PC-3 (cell line): ENCODE measurements at regions of chr11 and their contacts with region 1.

Region 1: GRCh38 chr11:69443138-69443967 is 38.1 kb upstream of the LINC01488 start:
- DNase-seq: peak; percentile 96
- ATAC-seq: peak; percentile 87
- H3K4me3 ChIP-seq: peak overlapping the region; percentile 48
- H3K27ac ChIP-seq: peak overlapping the region; percentile 86
- H3K4me1 ChIP-seq: peaks cover 39% of the 10 kb centered on the region
- H3K27me3 ChIP-seq: no peaks in the 10 kb centered on the region
- CTCF ChIP-seq: no peak

Region 2: DNA sequence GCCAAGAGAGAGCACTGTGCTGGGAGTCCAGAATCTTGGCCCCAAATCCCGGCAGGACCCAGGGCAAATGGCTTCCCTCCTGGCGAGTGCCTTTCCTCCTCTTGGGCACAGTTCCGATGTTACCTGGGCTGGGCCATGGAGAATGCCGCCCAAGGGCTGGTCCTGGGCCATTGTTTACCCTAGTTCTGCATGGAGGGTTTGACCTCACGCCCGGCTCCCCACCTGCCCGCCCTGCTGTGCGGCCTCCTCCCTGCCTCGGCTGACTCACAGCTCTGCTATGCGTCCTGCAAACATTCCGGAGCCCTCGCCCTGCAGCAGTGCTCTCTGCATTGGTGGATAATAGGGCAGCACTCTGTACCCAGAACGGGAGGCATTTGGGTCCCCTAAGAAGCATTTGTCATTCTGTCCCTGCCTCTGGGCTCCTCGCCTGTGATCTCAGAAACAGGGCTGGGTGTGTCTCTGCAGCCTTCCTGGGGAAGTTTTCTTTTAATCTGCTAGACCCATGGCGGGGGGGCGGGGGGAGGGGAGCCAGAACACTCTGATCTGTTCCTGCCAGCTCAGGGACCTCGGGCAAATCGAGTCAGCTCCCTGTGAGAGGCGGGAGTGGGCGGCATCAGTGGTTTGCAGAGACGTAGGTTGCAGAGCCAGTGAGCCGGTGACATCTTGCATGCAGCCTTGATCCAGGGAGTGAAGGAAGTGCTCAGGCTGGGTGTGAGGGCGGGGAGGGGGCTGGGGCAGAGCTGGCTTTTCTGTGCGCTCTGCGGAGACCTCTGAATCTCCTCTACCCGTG is 320.5 kb before region 1 on chr11:
- CTCF ChIA-PET with region 1: no interaction called
- POLR2A ChIA-PET with region 1: no interaction called
- intact Hi-C with region 1: loop called (anchors 10 kb)
- DNase-seq: peak; percentile 100
- ATAC-seq: peak; percentile 94
- H3K4me3 ChIP-seq: peak overlapping the region; percentile 41
- H3K27ac ChIP-seq: peak overlapping the region; percentile 97
- H3K4me1 ChIP-seq: peaks cover 32% of the 10 kb centered on the region
- H3K27me3 ChIP-seq: no peaks in the 10 kb centered on the region
- CTCF ChIP-seq: no peak

Region 3: GRCh38 chr11:69274531-69275255 is 168.7 kb before region 1 on chr11:
- CTCF ChIA-PET with region 1: no interaction called
- POLR2A ChIA-PET with region 1: no interaction called
- intact Hi-C with region 1: no loop called
- DNase-seq: peak; percentile 96
- ATAC-seq: peak; percentile 76
- H3K4me3 ChIP-seq: no peak overlapping the region
- H3K27ac ChIP-seq: peak overlapping the region; percentile 91
- H3K4me1 ChIP-seq: peaks cover 46% of the 10 kb centered on the region
- H3K27me3 ChIP-seq: no peaks in the 10 kb centered on the region
- CTCF ChIP-seq: no peak

Region 4: DNA sequence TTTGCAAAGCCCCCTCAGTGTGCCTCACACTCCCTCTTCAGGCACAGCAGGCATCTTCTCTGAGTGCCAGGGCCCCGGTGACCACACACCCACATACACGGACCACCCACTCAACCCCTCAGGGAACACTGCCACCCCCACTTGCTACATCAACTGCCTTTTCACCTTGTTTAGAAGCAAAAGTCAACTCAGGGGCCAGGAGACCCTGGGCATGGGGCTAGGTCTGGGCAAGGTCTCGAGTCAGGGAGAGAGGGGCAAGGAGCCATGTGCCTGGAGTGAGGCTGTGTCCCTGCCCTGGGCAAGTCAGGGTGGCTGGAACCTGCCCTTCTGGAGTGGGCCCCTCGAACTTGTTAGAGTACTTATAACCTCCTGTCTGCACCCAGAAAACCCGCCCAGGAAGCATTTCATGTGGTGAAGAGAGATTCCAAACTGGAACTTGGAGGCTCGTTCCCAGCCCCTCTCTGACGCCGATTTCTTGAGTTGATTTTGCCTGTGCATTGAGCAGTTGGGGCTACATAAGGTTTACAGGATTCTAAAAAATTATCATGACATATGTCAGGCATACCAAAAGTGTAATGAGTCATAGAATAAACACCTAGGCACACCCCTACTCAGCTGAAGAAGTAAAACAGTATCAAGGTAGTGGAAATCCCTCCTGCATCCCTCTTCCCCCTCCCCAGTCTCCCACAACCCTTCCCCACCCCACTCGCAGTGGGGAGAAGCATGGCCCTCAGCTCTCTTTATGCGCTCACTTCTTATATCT is 75.1 kb before region 1 on chr11:
- CTCF ChIA-PET with region 1: no interaction called
- POLR2A ChIA-PET with region 1: no interaction called
- intact Hi-C with region 1: loop called (anchors 5 kb)
- DNase-seq: peak; percentile 82
- ATAC-seq: peak; percentile 85
- H3K4me3 ChIP-seq: peak overlapping the region; percentile 18
- H3K27ac ChIP-seq: peak overlapping the region; percentile 88
- H3K4me1 ChIP-seq: peaks cover 36% of the 10 kb centered on the region
- H3K27me3 ChIP-seq: no peaks in the 10 kb centered on the region
- CTCF ChIP-seq: no peak

Region 5: GRCh38 chr11:69403556-69404215 is 39.7 kb before region 1 on chr11:
- CTCF ChIA-PET with region 1: no interaction called
- POLR2A ChIA-PET with region 1: no interaction called
- intact Hi-C with region 1: loop called (anchors 5 kb)
- DNase-seq: peak; percentile 91
- ATAC-seq: peak; percentile 98
- H3K4me3 ChIP-seq: no peak overlapping the region
- H3K27ac ChIP-seq: peak overlapping the region; percentile 19; the same call in 1 of the 2 replicates
- H3K4me1 ChIP-seq: peaks cover 13% of the 10 kb centered on the region
- H3K27me3 ChIP-seq: no peaks in the 10 kb centered on the region
- CTCF ChIP-seq: no peak

Region 6: GRCh38 chr11:69455969-69456368 is 12.6 kb after region 1 on chr11:
- CTCF ChIA-PET with region 1: no interaction called
- POLR2A ChIA-PET with region 1: no interaction called
- intact Hi-C with region 1: no loop called
- DNase-seq: no peak
- ATAC-seq: no peak
- H3K4me3 ChIP-seq: no peak overlapping the region
- H3K27ac ChIP-seq: no peak overlapping the region
- H3K4me1 ChIP-seq: peaks cover 9% of the 10 kb centered on the region
- H3K27me3 ChIP-seq: no peaks in the 10 kb centered on the region
- CTCF ChIP-seq: no peak